ENCODE measurements at regions of chr2 and their contacts with region 1.

Region 1: DNA sequence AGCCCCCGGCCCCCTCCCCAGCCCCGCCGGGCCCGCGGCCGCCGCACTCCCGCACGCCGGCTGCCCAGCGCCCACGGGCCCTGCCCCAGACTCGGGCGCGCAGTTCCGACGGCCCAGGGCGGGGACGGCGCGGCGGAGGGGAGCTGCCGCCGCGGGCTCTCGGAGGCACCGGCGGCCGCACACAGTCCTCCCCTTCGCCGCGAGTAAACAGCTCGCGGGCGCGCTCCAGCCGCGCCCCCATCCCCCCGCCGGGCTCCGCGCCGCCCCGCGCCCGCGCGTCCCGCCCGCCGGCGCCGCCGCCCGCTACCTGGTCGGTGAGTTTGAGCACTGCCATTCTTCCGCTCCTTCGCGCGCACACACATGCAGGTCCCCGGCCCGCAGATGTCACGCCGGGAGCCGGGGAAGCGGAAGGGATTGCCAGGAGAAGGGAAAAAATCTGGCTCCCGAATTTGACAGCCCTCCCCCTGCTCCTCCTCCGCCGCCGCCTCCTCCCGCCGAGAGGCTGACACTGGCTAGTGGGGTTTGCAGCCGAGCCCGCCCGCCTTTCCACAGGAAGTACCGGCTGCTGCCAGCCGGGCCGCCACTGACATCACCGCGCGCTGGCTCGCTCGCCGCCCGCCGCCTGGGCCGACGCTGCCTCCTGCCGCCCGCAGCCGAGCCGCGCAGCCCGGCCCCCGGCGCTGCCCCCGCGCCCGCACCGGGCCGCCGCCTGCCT is at the start of gene ANKRD44:
- DNase-seq: peak; percentile 89
- H3K4me3 Mint-ChIP-seq: peak within 1 kb of the TSS; percentile 90
- H3K27ac Mint-ChIP-seq: peak within 1 kb of the TSS; percentile 95
- H3K4me1 Mint-ChIP-seq: peaks cover 53% of the 10 kb centered on the region
- H3K27me3 Mint-ChIP-seq: no peaks in the 10 kb centered on the region
- total RNA-seq, gene ANKRD44: 214 to 246 TPM

Region 2: GRCh38 chr2:196926562-196927375 is 383.7 kb before region 1 on chr2 and contains the start of gene PGAP1:
- CTCF ChIA-PET with region 1: interaction called, 3 read pairs
- POLR2A ChIA-PET with region 1: interaction called, 30 read pairs
- DNase-seq: peak; percentile 89
- H3K4me3 Mint-ChIP-seq: peak within 1 kb of the TSS; percentile 93
- H3K27ac Mint-ChIP-seq: peak within 1 kb of the TSS; percentile 99
- H3K4me1 Mint-ChIP-seq: peaks cover 37% of the 10 kb centered on the region
- H3K27me3 Mint-ChIP-seq: no peaks in the 10 kb centered on the region
- total RNA-seq, gene PGAP1: 53.6 to 63.6 TPM

Region 3: GRCh38 chr2:197198890-197199289 is 111.5 kb before region 1 on chr2:
- CTCF ChIA-PET with region 1: interaction called, 28 read pairs
- POLR2A ChIA-PET with region 1: interaction called, 158 read pairs
- DNase-seq: peak; percentile 94
- H3K4me3 Mint-ChIP-seq: peak overlapping the region; percentile 79
- H3K27ac Mint-ChIP-seq: peak overlapping the region; percentile 96
- H3K4me1 Mint-ChIP-seq: peaks cover 85% of the 10 kb centered on the region
- H3K27me3 Mint-ChIP-seq: no peaks in the 10 kb centered on the region

Region 4: DNA sequence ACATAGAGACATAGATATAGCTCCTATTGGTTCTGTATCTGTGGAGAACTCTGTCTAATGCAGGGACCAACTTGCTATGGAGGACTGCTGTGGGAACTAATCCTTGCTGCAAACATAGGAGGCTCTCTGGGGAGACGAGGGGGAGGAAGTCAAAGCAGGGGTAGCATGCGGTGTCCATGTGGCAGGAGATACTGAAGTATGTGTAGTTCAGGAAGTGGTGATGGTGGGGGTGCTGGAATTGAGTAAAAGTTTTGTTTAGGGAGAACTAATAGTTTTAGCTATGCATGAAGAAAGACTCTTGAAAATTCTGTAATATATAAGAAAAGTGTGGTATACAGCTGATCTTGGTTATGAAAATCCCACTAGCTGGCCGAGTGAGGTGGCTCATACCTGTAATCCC is 61.8 kb before region 1 on chr2:
- CTCF ChIA-PET with region 1: interaction called, 3 read pairs
- POLR2A ChIA-PET with region 1: interaction called, 12 read pairs
- DNase-seq: no peak
- H3K4me3 Mint-ChIP-seq: no peak overlapping the region
- H3K27ac Mint-ChIP-seq: peak overlapping the region; percentile 23
- H3K4me1 Mint-ChIP-seq: peaks cover 66% of the 10 kb centered on the region
- H3K27me3 Mint-ChIP-seq: no peaks in the 10 kb centered on the region

Region 5: DNA sequence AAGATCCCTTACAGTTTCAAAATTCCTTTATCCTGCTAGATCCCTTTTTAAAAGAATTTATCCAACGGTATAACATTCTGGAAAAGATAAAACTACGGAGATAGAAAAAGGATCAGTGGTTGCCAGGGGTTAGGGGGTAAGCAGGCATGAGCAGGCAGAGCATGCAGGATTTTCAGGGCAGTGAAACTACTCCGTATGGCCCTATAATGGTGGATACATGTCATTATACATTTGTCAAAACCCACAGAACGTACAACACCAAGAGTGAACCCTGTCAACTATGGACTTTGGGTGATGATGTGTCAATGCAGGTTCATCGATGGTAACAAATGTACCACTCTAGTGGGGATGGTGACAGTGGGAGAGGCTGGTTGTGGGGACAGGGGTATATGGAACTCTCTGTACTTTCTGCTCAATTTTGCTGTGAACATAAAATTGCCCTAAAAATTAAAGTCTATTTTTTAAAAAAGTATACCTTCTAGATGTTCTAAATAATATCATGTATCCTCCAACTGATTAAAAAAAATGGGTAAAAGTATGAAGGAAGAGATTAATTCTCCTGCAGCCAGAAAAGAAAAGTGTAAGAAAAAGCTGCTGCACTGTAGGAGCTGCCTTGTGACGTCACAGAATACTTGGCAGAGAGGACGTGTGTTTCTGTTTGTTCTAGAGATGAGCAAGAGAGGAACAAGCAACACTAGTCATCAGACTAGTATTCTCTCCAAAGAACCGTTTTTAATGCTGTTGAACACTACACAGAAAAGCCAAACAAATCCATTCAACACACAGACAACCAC is 23.4 kb before region 1 on chr2:
- CTCF ChIA-PET with region 1: interaction called, 73 read pairs
- POLR2A ChIA-PET with region 1: interaction called, 280 read pairs
- DNase-seq: peak; percentile 54
- H3K4me3 Mint-ChIP-seq: peak overlapping the region; percentile 62
- H3K27ac Mint-ChIP-seq: peak overlapping the region; percentile 96
- H3K4me1 Mint-ChIP-seq: peaks cover 76% of the 10 kb centered on the region
- H3K27me3 Mint-ChIP-seq: no peaks in the 10 kb centered on the region

Region 6: DNA sequence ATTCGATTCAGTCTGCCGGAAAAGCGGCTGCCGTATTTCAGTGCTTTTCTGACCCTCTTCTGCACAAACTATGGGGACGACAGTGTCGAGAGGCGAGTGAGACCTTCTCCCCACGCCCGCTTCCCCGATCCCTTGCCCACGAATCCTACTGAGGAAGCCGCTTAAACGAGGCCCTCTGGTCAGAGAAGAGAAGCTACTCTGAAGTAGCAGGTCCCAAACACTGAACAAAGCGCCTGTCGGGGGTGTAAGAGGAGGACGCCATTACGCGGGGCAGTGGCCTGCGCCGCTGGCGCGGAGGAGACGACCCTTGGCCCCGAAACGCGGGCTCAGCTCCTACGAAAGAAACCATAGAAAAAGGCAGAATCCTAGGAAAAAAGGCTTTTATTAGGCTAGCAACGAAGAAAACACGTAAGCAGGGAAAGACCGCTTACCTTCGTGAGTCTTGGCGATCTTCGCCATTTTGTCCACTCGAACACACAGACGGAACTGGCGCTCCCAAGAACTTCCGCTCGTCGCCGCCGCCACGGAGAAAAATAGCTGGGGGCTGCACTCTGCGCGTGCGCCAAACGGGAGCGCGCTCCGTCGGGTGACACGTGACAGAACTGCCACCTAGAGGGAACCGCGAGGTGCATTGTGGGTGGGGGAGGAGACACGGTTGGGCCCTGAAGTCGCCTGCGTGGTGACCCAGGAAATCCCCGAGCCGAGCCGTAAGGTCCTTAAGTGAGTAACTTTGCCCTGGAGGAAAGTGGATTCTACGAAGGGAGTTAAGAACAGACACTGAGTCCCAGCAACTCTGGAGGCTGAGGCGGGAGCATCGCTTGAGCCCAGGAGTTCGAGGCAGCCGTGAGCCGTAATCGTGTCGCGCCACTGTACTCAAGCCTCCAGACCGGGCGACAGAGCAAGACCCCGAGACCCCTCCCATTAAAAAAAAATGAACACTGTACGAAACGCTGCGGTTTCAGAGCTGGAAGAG is 124.4 kb after region 1 on chr2 and contains the start of gene SF3B1:
- CTCF ChIA-PET with region 1: interaction called, 3 read pairs
- POLR2A ChIA-PET with region 1: interaction called, 10 read pairs
- DNase-seq: peak; percentile 99
- H3K4me3 Mint-ChIP-seq: peak within 1 kb of the TSS; percentile 84
- H3K27ac Mint-ChIP-seq: peak within 1 kb of the TSS; percentile 100
- H3K4me1 Mint-ChIP-seq: peaks cover 50% of the 10 kb centered on the region
- H3K27me3 Mint-ChIP-seq: no peaks in the 10 kb centered on the region
- total RNA-seq, gene SF3B1: 292 to 304 TPM

Region 7: DNA sequence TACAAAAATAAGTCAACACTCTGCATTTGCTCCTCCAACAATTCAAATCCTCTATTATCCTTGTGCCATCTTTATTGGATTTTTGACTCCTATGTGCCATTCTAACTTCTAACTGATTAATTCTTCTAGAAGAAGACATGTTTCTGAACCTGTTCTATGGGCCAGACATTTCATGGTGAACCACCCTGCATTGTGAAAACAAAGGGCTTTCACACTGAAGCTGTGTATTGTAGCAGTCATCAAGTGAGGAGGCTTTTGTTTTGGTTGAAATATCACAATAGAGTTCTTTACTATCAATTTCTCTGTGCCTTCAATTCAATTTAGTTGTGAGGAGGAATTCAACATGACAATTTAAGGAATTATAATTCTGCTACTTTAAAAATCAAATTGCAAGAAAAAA is 851.8 kb after region 1 on chr2:
- CTCF ChIA-PET with region 1: no interaction called
- POLR2A ChIA-PET with region 1: no interaction called
- DNase-seq: no peak
- H3K4me3 Mint-ChIP-seq: no peak overlapping the region
- H3K27ac Mint-ChIP-seq: no peak overlapping the region
- H3K4me1 Mint-ChIP-seq: no peaks in the 10 kb centered on the region
- H3K27me3 Mint-ChIP-seq: peaks cover 1% of the 10 kb centered on the region